ENCODE measurements at regions of chr10 and their contacts with region 1.

Region 1: DNA sequence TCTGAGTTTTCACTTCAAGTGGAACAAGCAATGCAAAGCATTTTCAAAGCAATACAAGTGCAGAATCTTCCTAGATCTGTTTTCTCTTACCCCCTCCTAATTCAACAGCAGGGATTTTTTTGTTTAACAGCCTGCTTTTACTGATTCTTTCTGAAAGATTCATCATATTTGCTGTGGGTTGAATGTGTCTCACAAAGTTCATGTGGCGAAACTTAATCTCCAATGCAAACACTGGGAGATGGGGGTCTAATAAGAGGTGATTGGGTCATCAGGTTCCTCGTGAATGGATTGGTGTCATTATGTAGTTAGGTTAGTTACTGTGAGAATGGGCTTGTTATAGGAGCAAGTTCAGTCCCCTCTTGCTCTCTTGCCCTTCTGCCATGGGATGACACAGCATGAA is 107.6 kb downstream of the CNNM2 start:
- DNase-seq: no peak
- H3K4me3 ChIP-seq: no peak overlapping the region
- H3K27ac ChIP-seq: no peak overlapping the region
- H3K4me1 ChIP-seq: no peaks in the 10 kb centered on the region
- H3K27me3 ChIP-seq: no peaks in the 10 kb centered on the region
- CTCF ChIP-seq: no peak

Region 2: GRCh38 chr10:102959360-102959759 is 66.3 kb before region 1 on chr10:
- CTCF ChIA-PET with region 1: no interaction called
- dilution Hi-C with region 1: loop called (anchors 5 kb)
- in situ Hi-C with region 1: no loop called
- intact Hi-C with region 1: no loop called
- DNase-seq: no peak
- H3K4me3 ChIP-seq: no peak overlapping the region
- H3K27ac ChIP-seq: no peak overlapping the region
- H3K4me1 ChIP-seq: no peaks in the 10 kb centered on the region
- H3K27me3 ChIP-seq: no peaks in the 10 kb centered on the region
- CTCF ChIP-seq: no peak

Region 3: DNA sequence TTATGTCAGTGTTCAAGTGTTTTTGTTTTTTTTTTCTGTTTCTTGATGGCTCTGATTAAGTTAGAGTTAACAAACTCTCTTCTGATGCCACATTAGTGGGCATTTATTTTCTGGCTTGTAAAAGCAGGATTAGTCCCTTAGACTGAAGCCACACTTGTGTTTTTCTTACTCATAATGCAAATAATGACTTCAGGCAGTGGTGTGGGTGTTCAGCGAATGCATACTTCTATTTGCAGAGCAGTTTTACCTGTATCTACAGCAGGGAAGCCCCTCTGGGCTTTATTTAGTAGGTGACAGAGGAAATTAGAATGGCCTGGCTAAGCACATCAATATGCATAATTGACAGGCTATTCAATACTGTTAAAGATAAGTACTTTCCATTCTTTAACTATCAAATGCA is 27.7 kb before region 1 on chr10:
- CTCF ChIA-PET with region 1: no interaction called
- dilution Hi-C with region 1: no loop called
- in situ Hi-C with region 1: no loop called
- intact Hi-C with region 1: loop called (anchors 5 kb)
- DNase-seq: peak; percentile 4
- H3K4me3 ChIP-seq: no peak overlapping the region
- H3K27ac ChIP-seq: no peak overlapping the region
- H3K4me1 ChIP-seq: no peaks in the 10 kb centered on the region
- H3K27me3 ChIP-seq: no peaks in the 10 kb centered on the region
- CTCF ChIP-seq: no peak

Region 4: DNA sequence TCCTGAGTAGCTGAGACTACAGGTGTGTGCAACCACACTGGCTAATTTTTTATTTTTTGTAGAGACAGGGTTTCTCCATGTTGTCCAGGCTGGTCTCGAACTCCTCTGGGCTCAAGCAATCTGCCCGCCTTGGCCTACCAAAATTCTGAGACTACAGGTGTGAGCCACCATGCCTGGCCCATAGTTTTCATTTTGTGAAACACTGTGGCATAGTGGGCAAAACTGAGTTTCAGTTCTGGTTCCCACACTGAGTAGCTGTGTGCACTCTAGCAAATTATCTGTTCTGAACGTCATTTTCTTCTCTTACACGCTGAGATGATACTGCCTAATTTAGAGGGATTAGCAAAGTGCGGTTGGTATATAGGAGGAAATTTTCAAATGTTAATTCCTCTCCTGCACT is 357.1 kb after region 1 on chr10:
- CTCF ChIA-PET with region 1: no interaction called
- dilution Hi-C with region 1: no loop called
- in situ Hi-C with region 1: no loop called
- intact Hi-C with region 1: no loop called
- DNase-seq: no peak
- H3K4me3 ChIP-seq: no peak overlapping the region
- H3K27ac ChIP-seq: no peak overlapping the region
- H3K4me1 ChIP-seq: no peaks in the 10 kb centered on the region
- H3K27me3 ChIP-seq: no peaks in the 10 kb centered on the region
- CTCF ChIP-seq: no peak